PC-3 (cell line): ENCODE measurements at regions of chr17 and their contacts with region 1.

Region 1: DNA sequence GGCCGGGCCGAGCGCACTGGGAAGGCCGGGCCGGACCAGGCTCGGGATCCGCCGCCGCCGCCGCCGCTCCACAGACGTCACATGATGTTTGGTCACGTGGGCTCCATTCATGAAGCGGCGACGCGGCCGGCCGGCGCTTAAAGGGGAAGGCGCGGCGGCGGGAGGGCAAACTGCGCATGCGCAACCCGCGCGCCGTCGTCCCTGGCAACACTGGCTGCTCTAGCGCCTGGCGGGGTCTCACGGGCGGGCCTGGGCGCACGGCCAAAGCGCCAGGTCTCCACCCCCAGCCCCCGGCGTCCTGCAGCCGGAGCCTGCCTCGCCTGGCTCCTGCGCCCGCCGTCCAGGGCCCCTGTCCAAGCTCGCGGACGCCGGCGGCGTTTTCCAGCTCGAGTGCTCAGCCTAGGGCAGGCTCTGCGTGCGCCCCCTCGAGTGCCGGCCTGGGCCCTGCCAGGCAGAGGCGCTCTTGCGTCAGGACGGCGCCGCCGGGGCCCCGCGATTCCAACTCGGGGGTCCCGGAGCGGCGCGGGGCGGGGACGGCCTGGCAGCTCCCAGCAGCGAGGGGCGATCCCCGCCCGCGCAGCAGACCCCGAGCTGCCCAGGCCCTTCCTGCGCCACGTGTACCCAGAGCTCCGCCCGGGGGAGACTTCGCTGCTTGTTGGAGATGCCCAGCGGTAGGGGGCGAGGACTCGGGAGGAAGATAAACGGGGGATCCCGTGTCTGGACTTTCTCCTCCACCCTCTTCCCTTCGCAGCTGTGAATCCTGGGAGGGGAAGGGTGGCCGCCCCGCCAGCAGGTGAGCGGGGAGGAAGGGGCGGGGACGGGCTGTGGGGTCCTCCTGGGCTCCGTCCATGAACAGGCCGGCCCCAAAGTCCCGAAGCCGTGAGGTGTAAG is at the start of gene MAFG:
- DNase-seq: peak; percentile 94
- ATAC-seq: peak; percentile 50
- H3K4me3 ChIP-seq: peak within 1 kb of the TSS; percentile 81
- H3K27ac ChIP-seq: peak within 1 kb of the TSS; percentile 80
- H3K4me1 ChIP-seq: peaks cover 39% of the 10 kb centered on the region
- H3K27me3 ChIP-seq: no peaks in the 10 kb centered on the region
- CTCF ChIP-seq: peak; percentile 52
- total RNA-seq, gene MAFG: 22.9 and 37.5 TPM in 2 replicates

Region 2: GRCh38 chr17:81871387-81872230 is 56.3 kb before region 1 on chr17:
- CTCF ChIA-PET with region 1: no interaction called
- POLR2A ChIA-PET with region 1: no interaction called
- intact Hi-C with region 1: loop called (anchors 5 kb)
- DNase-seq: peak; percentile 87
- ATAC-seq: no peak
- H3K4me3 ChIP-seq: peak overlapping the region; percentile 75
- H3K27ac ChIP-seq: peak overlapping the region; percentile 96
- H3K4me1 ChIP-seq: peaks cover 51% of the 10 kb centered on the region
- H3K27me3 ChIP-seq: no peaks in the 10 kb centered on the region
- CTCF ChIP-seq: peak; percentile 39; the same call in 1 of the 2 replicates

Region 3: DNA sequence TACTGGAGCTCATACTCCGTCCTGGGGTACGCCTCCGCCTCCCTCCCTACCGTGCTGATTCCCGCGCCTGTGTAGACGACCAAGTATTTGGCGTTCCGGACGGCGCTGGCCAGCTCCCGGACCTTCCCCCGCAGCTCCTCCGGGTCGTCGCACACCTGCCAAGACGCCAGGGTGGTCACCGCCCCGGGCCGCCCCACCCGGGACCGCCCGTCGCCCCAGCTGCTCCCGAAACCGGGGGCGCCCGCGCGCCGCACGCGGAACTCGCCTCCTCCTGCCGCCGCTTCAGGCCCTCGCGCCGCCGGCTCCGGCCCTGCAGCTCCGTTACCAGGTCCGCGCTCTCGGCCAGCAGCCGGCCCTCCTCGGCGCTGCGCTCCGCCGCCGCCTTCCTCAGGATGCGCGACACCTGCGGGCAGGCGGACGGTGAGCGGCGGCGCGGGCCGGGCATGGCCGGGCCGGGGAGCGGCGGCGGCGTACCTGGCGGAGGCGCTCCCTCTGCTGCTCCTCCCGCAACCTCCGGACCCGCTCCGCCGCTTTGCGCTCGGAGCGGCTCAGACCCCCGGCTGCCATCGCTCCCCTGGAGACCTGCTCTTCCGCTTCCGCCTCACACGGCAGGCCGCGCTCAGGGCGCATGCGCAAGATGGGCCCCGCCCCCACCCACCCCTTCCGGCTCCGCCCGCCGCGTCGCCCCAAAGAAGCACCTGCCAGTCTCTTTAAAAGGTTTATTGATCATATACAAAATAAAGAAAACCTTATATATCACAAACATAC is 10.1 kb before region 1 on chr17 and contains the start of gene SIRT7:
- CTCF ChIA-PET with region 1: interaction called, 10 read pairs
- POLR2A ChIA-PET with region 1: no interaction called
- intact Hi-C with region 1: no loop called
- DNase-seq: peak; percentile 89
- ATAC-seq: peak; percentile 64
- H3K4me3 ChIP-seq: peak within 1 kb of the TSS; percentile 75
- H3K27ac ChIP-seq: peak within 1 kb of the TSS; percentile 33
- H3K4me1 ChIP-seq: peaks cover 36% of the 10 kb centered on the region
- H3K27me3 ChIP-seq: no peaks in the 10 kb centered on the region
- CTCF ChIP-seq: no peak
- total RNA-seq, gene SIRT7: 51.6 and 70.8 TPM in 2 replicates